HEK293 (cell line): ENCODE measurements at regions of chr14 and their contacts with region 1.

Region 1: GRCh38 chr14:94180655-94181271 is 6.6 kb downstream of the PPP4R4 start:
- H3K4me3 ChIP-seq: no peak overlapping the region
- H3K27ac ChIP-seq: no peak overlapping the region
- H3K4me1 ChIP-seq: no peaks in the 10 kb centered on the region
- CTCF ChIP-seq: peak; percentile 48; the same call in 1 of the 2 replicates

Region 2: GRCh38 chr14:93748208-93749075 is 432.3 kb before region 1 on chr14:
- CTCF ChIA-PET with region 1: no interaction called
- POLR2A ChIA-PET with region 1: no interaction called
- H3K4me3 ChIP-seq: no peak overlapping the region
- H3K27ac ChIP-seq: no peak overlapping the region
- H3K4me1 ChIP-seq: no peaks in the 10 kb centered on the region
- CTCF ChIP-seq: no peak

Region 3: GRCh38 chr14:94157197-94157596 is 23.6 kb before region 1 on chr14:
- CTCF ChIA-PET with region 1: no interaction called
- POLR2A ChIA-PET with region 1: no interaction called
- H3K4me3 ChIP-seq: no peak overlapping the region
- H3K27ac ChIP-seq: no peak overlapping the region
- H3K4me1 ChIP-seq: no peaks in the 10 kb centered on the region; the same call in 1 of the 2 replicates
- CTCF ChIP-seq: no peak

Region 4: GRCh38 chr14:94192534-94192933 is 11.8 kb after region 1 on chr14:
- CTCF ChIA-PET with region 1: interaction called, 18 read pairs
- POLR2A ChIA-PET with region 1: no interaction called
- H3K4me3 ChIP-seq: no peak overlapping the region
- H3K27ac ChIP-seq: no peak overlapping the region
- H3K4me1 ChIP-seq: no peaks in the 10 kb centered on the region
- CTCF ChIP-seq: no peak